GM13976 (cell line): ENCODE measurements at regions of chr1 and their contacts with region 1.

Region 1: GRCh38 chr1:13228343-13228781 is 2.4 kb upstream of the PRAMEF18 start:
- DNase-seq: no peak
- CTCF ChIP-seq: peak; percentile 64

Region 2: DNA sequence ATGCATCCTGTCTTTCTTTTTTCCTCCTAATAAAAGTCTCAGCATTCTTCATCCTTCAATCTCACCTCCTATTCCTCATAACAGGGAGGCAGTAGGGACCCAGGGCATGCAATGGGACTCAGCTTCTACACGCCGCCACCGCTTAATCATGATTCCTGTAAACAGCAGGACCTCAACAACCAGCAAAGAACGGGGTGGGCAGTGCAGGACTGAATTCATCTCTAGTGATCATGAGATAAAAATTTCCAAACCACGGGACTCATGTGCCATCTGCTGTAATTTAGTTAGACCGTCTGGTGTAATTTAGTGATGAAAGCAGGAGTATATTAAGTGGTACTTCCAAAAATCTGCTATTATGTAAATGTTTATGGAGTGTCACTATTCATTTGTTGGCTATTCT is 449.5 kb before region 1 on chr1:
- in situ Hi-C with region 1: loop called (anchors 25 kb)
- DNase-seq: no peak
- CTCF ChIP-seq: no peak

Region 3: DNA sequence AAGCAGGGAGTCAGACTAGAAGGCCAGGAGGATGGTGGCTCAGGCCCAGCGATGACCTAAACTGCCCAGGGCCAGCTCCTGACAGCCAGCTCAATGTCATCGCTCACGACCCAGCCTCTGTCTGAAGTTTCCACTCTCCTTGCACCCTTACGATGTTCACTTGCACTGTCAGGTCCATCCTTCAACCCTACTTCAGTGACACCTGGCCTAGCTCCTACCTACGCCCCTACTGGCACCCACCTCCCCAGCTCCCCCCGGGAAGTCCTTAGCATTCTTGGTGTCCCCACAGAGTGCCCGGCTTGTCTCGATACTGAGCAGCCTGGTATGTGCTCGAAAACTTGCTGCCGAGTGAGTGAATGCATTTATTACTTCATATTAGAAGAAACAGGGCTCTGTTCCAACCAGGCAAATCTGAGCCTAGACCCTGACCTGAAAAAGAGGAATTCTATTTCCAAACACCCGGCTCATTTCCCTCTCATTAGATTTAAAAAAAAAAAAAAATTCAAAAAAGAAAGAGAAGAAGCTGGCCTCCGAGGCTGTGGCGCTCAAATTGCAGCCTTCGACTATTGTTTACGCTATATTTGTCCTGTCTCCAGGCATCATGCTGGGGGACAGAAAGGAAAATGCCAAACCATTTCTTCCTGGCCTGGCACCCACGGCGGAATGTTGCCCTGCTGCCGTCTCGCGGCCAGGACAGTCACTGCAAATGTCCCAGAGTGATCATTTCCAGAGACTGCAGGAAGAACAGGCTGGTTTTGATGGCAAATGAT is 315.3 kb after region 1 on chr1:
- in situ Hi-C with region 1: no loop called
- DNase-seq: no peak
- CTCF ChIP-seq: no peak